ENCODE measurements at regions of chr16 and their contacts with region 1.

Region 1: GRCh38 chr16:31853300-31853699 is 20.3 kb upstream of the ZNF267 start:
- DNase-seq: no peak
- ATAC-seq: no peak
- H3K4me3 ChIP-seq: no peak overlapping the region
- H3K27ac ChIP-seq: no peak overlapping the region
- H3K4me1 ChIP-seq: no peaks in the 10 kb centered on the region
- H3K27me3 ChIP-seq: peaks cover 2% of the 10 kb centered on the region; the same call in 1 of the 2 replicates
- CTCF ChIP-seq: no peak

Region 2: GRCh38 chr16:31785126-31785525 is 68.2 kb before region 1 on chr16:
- CTCF ChIA-PET with region 1: no interaction called
- POLR2A ChIA-PET with region 1: no interaction called
- in situ Hi-C with region 1: no loop called
- intact Hi-C with region 1: no loop called
- DNase-seq: no peak
- ATAC-seq: no peak
- H3K4me3 ChIP-seq: no peak overlapping the region
- H3K27ac ChIP-seq: no peak overlapping the region
- H3K4me1 ChIP-seq: no peaks in the 10 kb centered on the region
- H3K27me3 ChIP-seq: no peaks in the 10 kb centered on the region
- CTCF ChIP-seq: no peak

Region 3: GRCh38 chr16:31807086-31807485 is 46.2 kb before region 1 on chr16:
- CTCF ChIA-PET with region 1: no interaction called
- POLR2A ChIA-PET with region 1: no interaction called
- in situ Hi-C with region 1: no loop called
- intact Hi-C with region 1: loop called (anchors 10 kb)
- DNase-seq: no peak
- ATAC-seq: no peak
- H3K4me3 ChIP-seq: no peak overlapping the region
- H3K27ac ChIP-seq: no peak overlapping the region
- H3K4me1 ChIP-seq: no peaks in the 10 kb centered on the region
- H3K27me3 ChIP-seq: no peaks in the 10 kb centered on the region
- CTCF ChIP-seq: no peak

Region 4: DNA sequence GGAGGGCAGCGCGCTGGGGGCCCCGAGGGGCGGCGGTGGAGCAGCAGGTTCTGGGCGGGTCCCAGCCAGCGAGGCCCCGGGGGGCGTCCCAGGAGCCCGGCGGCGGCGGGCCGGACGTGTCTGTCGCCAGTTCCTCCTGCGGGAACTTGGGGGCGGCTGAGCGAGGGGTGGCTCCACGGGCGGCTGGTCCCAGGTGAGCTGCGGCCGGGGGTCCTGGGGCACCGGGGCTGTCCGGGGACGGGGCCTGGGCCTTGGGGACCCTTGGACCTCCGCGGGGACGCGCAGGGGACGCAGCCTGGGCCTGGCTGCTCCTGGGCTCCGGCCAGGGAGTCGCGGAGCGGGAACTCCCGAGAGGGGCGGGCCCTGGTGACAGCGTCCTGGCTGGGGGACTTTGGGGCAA is 33.9 kb before region 1 on chr16:
- CTCF ChIA-PET with region 1: no interaction called
- POLR2A ChIA-PET with region 1: no interaction called
- in situ Hi-C with region 1: no loop called
- intact Hi-C with region 1: no loop called
- DNase-seq: no peak
- ATAC-seq: no peak
- H3K4me3 ChIP-seq: no peak overlapping the region
- H3K27ac ChIP-seq: no peak overlapping the region
- H3K4me1 ChIP-seq: no peaks in the 10 kb centered on the region
- H3K27me3 ChIP-seq: no peaks in the 10 kb centered on the region
- CTCF ChIP-seq: no peak